CD8-positive, alpha-beta T cell (primary cell): ENCODE measurements at regions of chr6 and their contacts with region 1.

Region 1: DNA sequence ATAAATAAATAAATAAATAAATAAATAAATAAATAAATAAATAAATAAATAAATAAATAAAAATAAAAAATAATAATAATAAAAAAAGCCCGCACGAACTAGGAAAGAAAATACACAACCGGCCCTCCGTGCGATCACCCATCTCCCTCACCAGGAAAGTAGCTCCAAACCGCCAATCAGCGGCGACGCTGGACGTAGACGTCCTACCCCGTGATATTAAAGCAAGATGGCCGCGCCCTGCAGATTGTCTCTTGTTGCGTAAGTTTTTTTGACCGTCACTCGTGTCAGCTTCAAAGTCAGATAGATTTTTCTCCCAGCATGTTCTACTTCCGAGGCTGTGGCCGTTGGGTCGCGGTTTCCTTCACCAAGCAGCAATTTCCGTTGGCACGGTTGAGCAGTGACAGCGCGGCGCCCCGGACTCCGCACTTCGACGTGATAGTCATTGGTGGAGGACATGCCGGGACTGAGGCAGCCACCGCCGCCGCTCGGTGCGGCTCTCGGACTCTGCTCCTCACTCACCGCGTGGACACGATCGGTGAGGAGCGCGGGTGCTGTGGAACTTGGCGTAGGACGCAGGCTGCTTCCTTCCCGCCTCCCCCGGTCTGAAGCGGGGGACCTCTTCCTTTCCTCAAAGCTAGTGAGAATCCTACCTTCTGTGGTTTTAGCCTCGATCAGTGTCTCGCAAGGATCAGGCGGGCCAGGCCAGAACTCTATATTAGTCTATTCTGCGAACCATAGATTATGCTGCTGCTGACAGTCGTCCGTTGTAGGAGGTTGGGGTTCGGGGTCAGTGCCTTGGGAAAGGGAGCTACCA is at the start of gene MTO1:
- DNase-seq: peak; percentile 64 to 95 (median 84)
- ATAC-seq: peak; percentile 93
- H3K4me3 ChIP-seq: peak within 1 kb of the TSS; percentile 97 to 98
- H3K4me3 Mint-ChIP-seq: peak within 1 kb of the TSS; percentile 97
- H3K27ac ChIP-seq: peak within 1 kb of the TSS; percentile 93 to 97
- H3K27ac Mint-ChIP-seq: peak within 1 kb of the TSS; percentile 98
- H3K4me1 ChIP-seq: peaks cover 8% of the 10 kb centered on the region
- H3K4me1 Mint-ChIP-seq: peaks cover 40% of the 10 kb centered on the region
- H3K27me3 ChIP-seq: no peaks in the 10 kb centered on the region
- H3K27me3 Mint-ChIP-seq: no peaks in the 10 kb centered on the region
- CTCF ChIP-seq: no peak
- total RNA-seq, gene MTO1: 35.7 to 37.0 TPM

Region 2: GRCh38 chr6:72622094-72622940 is 839.4 kb before region 1 on chr6:
- CTCF ChIA-PET with region 1: no interaction called
- POLR2A ChIA-PET with region 1: interaction called, 3 read pairs
- intact Hi-C with region 1: loop called in 1 of 2 experiments (anchors 10 kb)
- DNase-seq: peak; percentile 34 to 82 (median 59)
- ATAC-seq: peak; percentile 42
- H3K4me3 ChIP-seq: peak overlapping the region; percentile 79 to 80
- H3K4me3 Mint-ChIP-seq: peak overlapping the region; percentile 96
- H3K27ac ChIP-seq: peak overlapping the region in 1 of 2 experiments; percentile 17
- H3K27ac Mint-ChIP-seq: peak overlapping the region; percentile 19
- H3K4me1 ChIP-seq: peaks cover 21% of the 10 kb centered on the region
- H3K4me1 Mint-ChIP-seq: peaks cover 57% of the 10 kb centered on the region
- H3K27me3 ChIP-seq: no peaks in the 10 kb centered on the region
- H3K27me3 Mint-ChIP-seq: no peaks in the 10 kb centered on the region
- CTCF ChIP-seq: peak; percentile 15

Region 3: GRCh38 chr6:73451223-73452107 is 10.3 kb before region 1 on chr6:
- CTCF ChIA-PET with region 1: interaction called, 3 read pairs
- POLR2A ChIA-PET with region 1: interaction called, 54 read pairs
- intact Hi-C with region 1: loop called in 1 of 2 experiments (anchors 1 kb)
- DNase-seq: peak in 8 of 9 experiments; percentile 18 to 71 (median 52)
- ATAC-seq: peak; percentile 61
- H3K4me3 ChIP-seq: peak overlapping the region; percentile 67 to 91
- H3K4me3 Mint-ChIP-seq: peak overlapping the region; percentile 88
- H3K27ac ChIP-seq: peak overlapping the region; percentile 64 to 81
- H3K27ac Mint-ChIP-seq: peak overlapping the region; percentile 82
- H3K4me1 ChIP-seq: peaks cover 22% of the 10 kb centered on the region
- H3K4me1 Mint-ChIP-seq: peaks cover 28% of the 10 kb centered on the region
- H3K27me3 ChIP-seq: no peaks in the 10 kb centered on the region
- H3K27me3 Mint-ChIP-seq: no peaks in the 10 kb centered on the region
- CTCF ChIP-seq: no peak

Region 4: DNA sequence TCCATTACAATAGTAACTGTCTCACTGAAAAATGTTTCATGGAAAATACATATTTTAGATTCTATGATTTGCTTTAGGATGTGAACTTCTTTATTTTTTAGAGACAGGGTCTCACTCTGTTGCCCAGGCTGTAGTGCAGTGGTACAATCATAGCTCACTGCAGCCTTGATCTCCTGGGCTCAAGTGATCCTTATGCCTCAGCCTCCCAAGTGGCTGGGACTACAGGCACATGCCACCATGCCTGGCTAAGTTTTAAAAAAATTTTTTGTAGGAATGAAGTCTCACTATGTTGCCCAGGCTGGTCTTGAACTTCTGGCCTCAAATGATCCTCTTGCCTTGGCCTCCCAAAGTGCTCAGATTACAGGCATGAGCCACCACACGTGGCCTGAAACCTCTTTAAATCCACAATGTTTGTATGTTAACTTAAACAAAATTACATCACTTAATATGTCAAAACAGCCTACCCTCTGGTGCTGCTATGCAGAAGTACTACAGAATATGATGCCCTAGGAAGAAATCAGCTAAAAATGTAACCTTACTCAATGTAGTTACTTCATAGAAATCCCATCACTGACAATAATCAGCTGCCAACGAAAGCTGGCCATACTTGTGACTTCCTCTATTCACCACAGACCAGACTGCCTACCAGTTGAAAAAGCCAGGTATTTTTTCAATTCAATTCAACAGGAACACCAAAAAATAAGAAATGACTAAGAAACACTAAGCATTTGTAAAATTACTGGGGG is 41.5 kb after region 1 on chr6:
- CTCF ChIA-PET with region 1: no interaction called
- POLR2A ChIA-PET with region 1: no interaction called
- intact Hi-C with region 1: loop called in 1 of 2 experiments (anchors 5 kb)
- DNase-seq: no peak
- ATAC-seq: no peak
- H3K4me3 ChIP-seq: no peak overlapping the region
- H3K4me3 Mint-ChIP-seq: no peak overlapping the region
- H3K27ac ChIP-seq: no peak overlapping the region
- H3K27ac Mint-ChIP-seq: peak overlapping the region; percentile 35
- H3K4me1 ChIP-seq: no peaks in the 10 kb centered on the region
- H3K4me1 Mint-ChIP-seq: no peaks in the 10 kb centered on the region
- H3K27me3 ChIP-seq: no peaks in the 10 kb centered on the region
- H3K27me3 Mint-ChIP-seq: no peaks in the 10 kb centered on the region
- CTCF ChIP-seq: no peak

Region 5: DNA sequence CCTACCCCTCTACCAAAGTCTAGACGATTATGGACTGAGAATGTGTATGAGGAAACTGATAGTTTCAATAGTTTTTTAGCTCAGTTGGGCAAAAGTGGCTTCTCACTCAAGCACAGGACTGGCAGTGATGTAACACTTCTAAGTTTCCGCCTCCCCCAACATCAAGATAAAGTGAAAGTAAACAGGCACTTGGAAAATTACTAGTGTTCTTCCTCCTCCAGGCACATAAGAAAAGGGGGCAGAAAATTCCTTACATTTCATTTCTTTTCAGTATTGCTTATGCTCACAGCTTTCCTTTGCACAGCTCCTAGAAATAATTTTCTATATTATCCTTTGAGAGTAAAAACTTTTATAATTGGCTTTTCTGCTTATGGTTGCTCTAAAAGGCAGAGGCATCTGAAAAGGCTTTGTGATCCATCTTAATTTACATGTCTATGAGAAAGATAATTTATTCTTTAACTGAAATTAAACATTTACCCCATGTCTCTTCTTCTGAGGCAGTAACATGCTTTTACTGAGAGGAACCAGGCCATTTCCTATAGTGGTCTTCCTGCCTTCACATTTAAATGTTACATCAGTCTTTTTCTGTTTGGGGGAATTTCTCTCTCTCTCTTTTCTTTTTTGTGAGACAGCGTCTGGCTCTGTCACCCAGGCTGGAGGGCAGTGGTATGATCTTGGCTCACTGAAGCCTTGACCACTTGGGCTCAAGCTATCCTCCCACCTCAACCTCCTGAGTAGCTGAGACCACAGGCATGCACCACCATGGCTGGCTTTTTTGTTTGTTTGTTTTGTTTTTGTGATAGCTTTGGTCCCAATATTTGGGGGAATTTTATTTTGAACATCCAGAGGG is 124.0 kb after region 1 on chr6:
- CTCF ChIA-PET with region 1: no interaction called
- POLR2A ChIA-PET with region 1: interaction called, 4 read pairs
- intact Hi-C with region 1: loop called in 1 of 2 experiments (anchors 5 kb)
- DNase-seq: peak in 7 of 9 experiments; percentile 20 to 87 (median 36)
- ATAC-seq: peak; percentile 82
- H3K4me3 ChIP-seq: peak overlapping the region; percentile 29 to 45
- H3K4me3 Mint-ChIP-seq: peak overlapping the region; percentile 80
- H3K27ac ChIP-seq: peak overlapping the region; percentile 62 to 98
- H3K27ac Mint-ChIP-seq: peak overlapping the region; percentile 99
- H3K4me1 ChIP-seq: peaks cover 15% of the 10 kb centered on the region
- H3K4me1 Mint-ChIP-seq: peaks cover 30% of the 10 kb centered on the region
- H3K27me3 ChIP-seq: no peaks in the 10 kb centered on the region
- H3K27me3 Mint-ChIP-seq: no peaks in the 10 kb centered on the region
- CTCF ChIP-seq: no peak

Region 6: DNA sequence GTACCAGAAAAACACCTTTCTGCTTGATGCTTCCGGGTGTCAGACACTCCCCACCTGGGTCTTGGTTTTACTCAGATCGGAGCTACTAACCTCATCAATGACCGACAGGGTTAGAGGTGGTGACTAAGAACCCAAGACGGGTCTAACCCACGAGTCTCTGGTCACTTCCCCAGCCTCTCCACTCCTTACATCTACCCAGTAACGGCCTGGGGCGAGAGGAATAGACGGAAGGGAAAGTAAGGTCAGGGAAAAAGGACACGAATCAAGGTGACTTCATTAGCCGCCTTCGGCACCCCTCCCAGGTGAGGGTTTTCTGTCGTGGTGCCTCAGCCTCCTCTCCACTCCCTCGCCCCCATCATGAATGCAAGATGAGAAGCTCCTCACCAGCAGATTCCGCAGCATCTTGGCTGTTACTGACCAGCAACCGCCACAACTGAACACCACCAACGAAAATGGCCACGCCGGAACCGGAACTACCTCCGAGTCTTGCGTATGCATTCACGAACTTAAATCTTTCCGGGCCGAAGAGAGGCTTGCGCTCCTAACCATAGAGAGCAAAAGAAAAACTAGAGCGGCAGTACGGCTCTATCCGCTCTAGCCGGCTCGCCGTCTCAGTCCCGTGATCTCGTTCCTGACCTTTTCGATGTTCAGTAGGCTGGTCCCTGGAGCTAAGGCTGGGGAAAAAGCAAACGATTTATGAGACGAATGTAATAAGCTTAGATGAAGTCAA is 1781.8 kb after region 1 on chr6 and contains the start of gene COX7A2:
- CTCF ChIA-PET with region 1: no interaction called
- POLR2A ChIA-PET with region 1: interaction called, 3 read pairs
- intact Hi-C with region 1: loop called (anchors 5 to 10 kb)
- DNase-seq: peak; percentile 71 to 94 (median 87)
- ATAC-seq: peak; percentile 94
- H3K4me3 ChIP-seq: peak within 1 kb of the TSS; percentile 94 to 98
- H3K4me3 Mint-ChIP-seq: peak within 1 kb of the TSS; percentile 99
- H3K27ac ChIP-seq: peak within 1 kb of the TSS; percentile 93 to 97
- H3K27ac Mint-ChIP-seq: peak within 1 kb of the TSS; percentile 100
- H3K4me1 ChIP-seq: peaks cover 6% of the 10 kb centered on the region
- H3K4me1 Mint-ChIP-seq: peaks cover 36% of the 10 kb centered on the region
- H3K27me3 ChIP-seq: no peaks in the 10 kb centered on the region
- H3K27me3 Mint-ChIP-seq: peaks cover 6% of the 10 kb centered on the region
- CTCF ChIP-seq: no peak
- total RNA-seq, gene COX7A2: 221 to 229 TPM